GM10248 (cell line): ENCODE measurements at regions of chr5 and their contacts with region 1.

Region 1: DNA sequence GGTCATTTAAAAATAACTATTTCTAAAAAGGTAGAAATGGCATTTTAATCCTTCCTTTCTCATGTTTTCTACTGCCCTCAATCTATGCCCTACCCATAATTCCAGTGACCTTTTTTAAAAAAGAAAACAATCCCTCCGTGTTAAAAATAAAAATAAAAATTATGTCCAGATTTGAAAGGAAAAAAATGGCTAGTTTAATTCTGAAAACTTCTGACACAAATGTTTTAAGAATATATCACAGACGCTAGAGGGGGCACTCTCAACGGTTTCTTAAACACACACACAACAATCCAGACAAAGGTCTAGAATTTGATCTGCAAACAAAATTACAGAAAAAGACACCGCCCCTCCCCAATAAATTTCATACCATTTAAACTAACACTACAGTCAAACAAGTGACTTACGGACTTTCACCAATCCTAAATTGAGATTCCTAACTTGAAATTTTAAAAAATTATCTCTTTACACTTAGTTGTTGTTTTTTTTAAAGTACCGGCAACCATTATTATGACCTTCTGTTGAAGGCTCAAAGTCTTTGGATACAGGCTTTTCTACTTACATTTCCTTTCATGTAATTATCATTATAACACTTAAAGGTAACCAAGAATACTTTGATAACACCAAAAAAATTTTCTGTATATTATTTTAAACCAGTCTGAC is 38.2 kb downstream of the CLINT1 start:
- DNase-seq: peak; percentile 26
- CTCF ChIP-seq: peak; percentile 57

Region 2: GRCh38 chr5:157917899-157918809 is 97.4 kb after region 1 on chr5:
- CTCF ChIA-PET with region 1: interaction called, 10 read pairs
- POLR2A ChIA-PET with region 1: no interaction called
- DNase-seq: peak; percentile 56
- CTCF ChIP-seq: peak; percentile 63

Region 3: GRCh38 chr5:157994906-157995519 is 174.3 kb after region 1 on chr5:
- CTCF ChIA-PET with region 1: interaction called, 39 read pairs
- POLR2A ChIA-PET with region 1: no interaction called
- DNase-seq: peak; percentile 63
- CTCF ChIP-seq: peak; percentile 52

Region 4: GRCh38 chr5:159802661-159803060 is 1981.9 kb after region 1 on chr5:
- CTCF ChIA-PET with region 1: no interaction called
- POLR2A ChIA-PET with region 1: interaction called, 10 read pairs
- DNase-seq: no peak
- CTCF ChIP-seq: no peak